ENCODE measurements at regions of chr15 and their contacts with region 1.

Region 1: DNA sequence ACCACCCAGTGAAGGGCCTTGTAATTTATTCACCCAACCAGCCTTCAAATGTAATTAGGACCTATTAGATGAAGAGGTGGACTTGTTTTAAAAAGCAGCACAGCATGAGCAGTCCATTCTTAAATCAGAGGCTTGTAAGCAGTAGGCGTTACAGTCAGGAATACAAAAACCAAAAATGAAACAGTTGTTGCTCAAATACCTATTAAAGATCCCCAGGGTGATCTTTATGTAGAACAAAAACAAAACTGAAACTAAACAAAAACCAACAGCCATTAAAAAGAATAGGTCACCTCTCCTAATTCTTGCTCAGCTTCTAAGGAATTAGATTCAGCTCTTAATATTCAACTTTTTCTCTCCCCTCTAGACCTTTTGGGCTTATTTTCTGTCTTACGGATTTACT is 104.9 kb upstream of the ST8SIA2 start:
- DNase-seq: no peak
- ATAC-seq: no peak
- H3K4me3 ChIP-seq: no peak overlapping the region
- H3K27ac ChIP-seq: no peak overlapping the region
- H3K4me1 ChIP-seq: no peaks in the 10 kb centered on the region
- H3K27me3 ChIP-seq: peaks cover 0 to 5% (median 0%) of the 10 kb centered on the region in 3 donors
- CTCF ChIP-seq: no peak
- POLR2A ChIP-seq: no peak

Region 2: DNA sequence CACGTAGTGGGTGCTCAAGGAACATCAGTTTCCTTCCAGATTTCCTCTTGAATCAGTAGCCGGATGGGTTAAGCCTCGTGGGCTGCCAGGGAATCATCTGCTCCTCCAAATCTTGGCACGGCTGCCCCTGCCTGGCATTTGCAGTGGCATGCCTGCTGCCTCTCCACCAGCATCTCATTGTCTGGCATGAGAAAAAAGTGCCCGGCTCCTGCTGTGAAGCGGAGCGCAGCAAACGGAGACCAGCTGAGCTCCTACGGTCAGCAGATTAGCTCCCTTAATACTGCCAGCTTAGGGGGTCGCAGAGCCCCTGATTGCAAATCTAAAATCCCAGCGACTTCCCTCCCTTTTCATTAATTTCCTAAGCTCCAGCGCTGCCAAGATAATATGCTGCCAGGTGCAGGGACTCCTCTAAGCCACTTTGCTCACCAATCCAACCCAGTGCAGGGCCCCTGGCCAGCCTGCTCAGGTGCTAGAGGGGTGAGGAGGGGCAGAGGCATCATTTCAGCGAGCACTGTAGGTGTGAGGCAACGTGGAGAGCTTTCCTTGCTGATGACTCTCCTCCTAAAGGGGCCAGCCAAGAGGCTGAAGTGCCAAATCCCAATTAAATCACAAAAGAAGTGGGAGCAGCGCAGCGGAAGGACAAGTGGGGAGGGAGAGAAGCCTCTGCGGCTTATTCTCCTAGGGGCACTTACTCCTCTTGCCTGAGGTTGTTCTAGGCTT is 55.3 kb after region 1 on chr15:
- in situ Hi-C with region 1: loop called in 1 of 4 experiments (anchors 10 kb)
- intact Hi-C with region 1: no loop called
- DNase-seq: no peak
- ATAC-seq: no peak
- H3K4me3 ChIP-seq: no peak overlapping the region
- H3K27ac ChIP-seq: no peak overlapping the region
- H3K4me1 ChIP-seq: no peaks in the 10 kb centered on the region
- H3K27me3 ChIP-seq: peaks cover 0 to 14% (median 13%) of the 10 kb centered on the region in 3 donors
- CTCF ChIP-seq: no peak
- POLR2A ChIP-seq: no peak